CD4-positive, alpha-beta T cell (primary cell): ENCODE measurements at regions of chr6 and their contacts with region 1.

Region 1: DNA sequence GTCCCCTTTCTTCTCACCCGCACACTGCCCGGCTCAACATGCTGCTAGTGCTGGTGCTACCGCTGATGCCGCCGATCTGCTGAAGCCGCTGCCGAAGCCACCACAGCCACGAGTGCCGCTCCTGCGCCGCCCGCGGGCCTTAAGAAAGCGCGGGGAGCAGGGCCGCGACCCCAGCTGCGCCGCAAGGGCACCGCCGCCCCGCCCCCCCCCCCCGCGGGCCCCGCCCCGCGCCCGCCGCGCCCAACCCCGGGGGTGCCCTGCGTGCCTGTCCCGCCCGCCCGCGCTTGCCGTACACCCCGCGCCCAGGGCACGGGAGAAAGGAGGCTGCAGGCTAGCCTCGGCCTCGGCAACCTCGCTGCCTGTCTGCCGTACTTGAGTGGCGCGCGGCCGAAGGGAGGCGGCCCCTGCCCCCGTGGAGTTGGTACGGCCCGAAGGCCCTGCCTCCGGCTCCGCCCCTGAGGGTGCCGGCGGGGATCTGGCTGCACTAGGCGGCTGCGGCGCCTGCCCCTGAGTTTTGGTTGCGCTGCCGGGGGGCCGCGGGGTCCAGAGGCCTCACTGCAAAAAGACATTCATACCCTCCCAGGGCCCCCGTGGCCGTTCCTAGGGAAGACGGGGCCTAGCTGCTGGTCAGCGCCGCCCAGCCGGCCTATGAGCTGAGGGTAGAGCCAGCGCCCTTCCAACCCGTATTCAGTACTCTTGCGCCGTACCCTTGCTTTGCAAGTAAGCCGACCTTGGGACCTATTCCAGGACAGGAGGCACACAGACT is at the start of gene SOD2:
- DNase-seq: peak; percentile 72 to 93 (median 80)
- ATAC-seq: peak; percentile 69
- H3K4me3 ChIP-seq: peak within 1 kb of the TSS; percentile 90
- H3K4me3 Mint-ChIP-seq: peak within 1 kb of the TSS; percentile 98
- H3K27ac ChIP-seq: peak within 1 kb of the TSS; percentile 76 to 92
- H3K27ac Mint-ChIP-seq: peak within 1 kb of the TSS; percentile 88
- H3K4me1 ChIP-seq: peaks cover 47% of the 10 kb centered on the region
- H3K4me1 Mint-ChIP-seq: peaks cover 51% of the 10 kb centered on the region
- H3K27me3 ChIP-seq: no peaks in the 10 kb centered on the region
- H3K27me3 Mint-ChIP-seq: no peaks in the 10 kb centered on the region
- CTCF ChIP-seq: no peak
- total RNA-seq, gene SOD2: 182 to 195 TPM

Region 2: DNA sequence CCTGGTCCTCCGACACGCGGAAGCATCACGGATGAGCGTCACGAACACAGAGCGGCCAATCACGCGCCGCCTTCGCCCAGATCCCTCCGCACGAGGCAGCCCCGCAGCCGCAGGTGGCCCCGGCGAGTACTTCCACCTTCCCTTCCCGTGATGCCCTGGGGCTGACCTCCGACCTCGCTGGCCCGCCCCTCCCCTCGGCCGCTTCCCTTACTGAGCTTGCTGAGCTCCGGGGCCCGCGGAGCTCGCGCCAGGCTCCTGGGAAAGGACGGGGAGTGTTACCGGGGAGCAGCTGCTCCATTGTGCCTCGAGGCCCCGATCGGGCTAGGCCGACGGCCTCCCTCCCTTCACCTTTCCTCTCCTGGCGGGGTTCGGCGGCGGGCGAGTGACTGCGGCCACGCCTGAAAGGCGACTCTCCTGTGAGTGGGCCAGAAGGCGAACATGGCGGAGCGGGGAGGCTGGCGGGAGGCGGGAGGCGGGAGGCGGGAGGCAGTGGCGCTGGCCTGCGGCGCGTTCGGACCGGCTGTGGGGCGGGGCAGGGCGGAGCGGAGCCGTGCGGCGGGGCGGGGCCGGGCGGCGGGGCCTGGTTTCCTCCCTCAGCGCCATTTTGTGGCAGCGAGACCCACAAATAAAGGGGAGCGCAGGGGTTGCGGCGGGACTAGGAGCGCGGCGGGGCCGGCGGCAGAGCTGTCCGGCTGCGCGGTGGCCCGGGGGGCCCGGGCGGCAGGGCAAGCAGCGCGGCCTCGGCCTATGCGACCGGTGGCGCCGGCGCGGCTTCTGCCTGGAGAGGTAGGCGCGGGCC is 33.8 kb after region 1 on chr6 and contains the start of gene WTAP:
- CTCF ChIA-PET with region 1: interaction called, 7 read pairs
- POLR2A ChIA-PET with region 1: interaction called, 195 read pairs
- intact Hi-C with region 1: loop called (anchors 1 kb)
- DNase-seq: peak; percentile 94 to 99 (median 96)
- ATAC-seq: peak; percentile 86
- H3K4me3 ChIP-seq: peak within 1 kb of the TSS; percentile 82
- H3K4me3 Mint-ChIP-seq: peak within 1 kb of the TSS; percentile 99
- H3K27ac ChIP-seq: peak within 1 kb of the TSS; percentile 95 to 98
- H3K27ac Mint-ChIP-seq: peak within 1 kb of the TSS; percentile 100
- H3K4me1 ChIP-seq: peaks cover 25% of the 10 kb centered on the region
- H3K4me1 Mint-ChIP-seq: peaks cover 80% of the 10 kb centered on the region
- H3K27me3 ChIP-seq: no peaks in the 10 kb centered on the region
- H3K27me3 Mint-ChIP-seq: peaks cover 9% of the 10 kb centered on the region
- CTCF ChIP-seq: no peak
- total RNA-seq, gene WTAP: 211 to 227 TPM

Region 3: GRCh38 chr6:159789377-159790148 is 96.3 kb after region 1 on chr6 and contains the start of gene TCP1:
- CTCF ChIA-PET with region 1: interaction called, 8 read pairs
- POLR2A ChIA-PET with region 1: interaction called, 58 read pairs
- intact Hi-C with region 1: loop called (anchors 1 kb)
- DNase-seq: peak; percentile 95 to 100 (median 99)
- ATAC-seq: peak; percentile 83
- H3K4me3 ChIP-seq: peak within 1 kb of the TSS; percentile 84
- H3K4me3 Mint-ChIP-seq: peak within 1 kb of the TSS; percentile 99
- H3K27ac ChIP-seq: peak within 1 kb of the TSS; percentile 88 to 97
- H3K27ac Mint-ChIP-seq: peak within 1 kb of the TSS; percentile 95
- H3K4me1 ChIP-seq: peaks cover 37% of the 10 kb centered on the region
- H3K4me1 Mint-ChIP-seq: peaks cover 73% of the 10 kb centered on the region
- H3K27me3 ChIP-seq: no peaks in the 10 kb centered on the region
- H3K27me3 Mint-ChIP-seq: no peaks in the 10 kb centered on the region
- CTCF ChIP-seq: no peak
- total RNA-seq, gene TCP1: 212 to 216 TPM

Region 4: DNA sequence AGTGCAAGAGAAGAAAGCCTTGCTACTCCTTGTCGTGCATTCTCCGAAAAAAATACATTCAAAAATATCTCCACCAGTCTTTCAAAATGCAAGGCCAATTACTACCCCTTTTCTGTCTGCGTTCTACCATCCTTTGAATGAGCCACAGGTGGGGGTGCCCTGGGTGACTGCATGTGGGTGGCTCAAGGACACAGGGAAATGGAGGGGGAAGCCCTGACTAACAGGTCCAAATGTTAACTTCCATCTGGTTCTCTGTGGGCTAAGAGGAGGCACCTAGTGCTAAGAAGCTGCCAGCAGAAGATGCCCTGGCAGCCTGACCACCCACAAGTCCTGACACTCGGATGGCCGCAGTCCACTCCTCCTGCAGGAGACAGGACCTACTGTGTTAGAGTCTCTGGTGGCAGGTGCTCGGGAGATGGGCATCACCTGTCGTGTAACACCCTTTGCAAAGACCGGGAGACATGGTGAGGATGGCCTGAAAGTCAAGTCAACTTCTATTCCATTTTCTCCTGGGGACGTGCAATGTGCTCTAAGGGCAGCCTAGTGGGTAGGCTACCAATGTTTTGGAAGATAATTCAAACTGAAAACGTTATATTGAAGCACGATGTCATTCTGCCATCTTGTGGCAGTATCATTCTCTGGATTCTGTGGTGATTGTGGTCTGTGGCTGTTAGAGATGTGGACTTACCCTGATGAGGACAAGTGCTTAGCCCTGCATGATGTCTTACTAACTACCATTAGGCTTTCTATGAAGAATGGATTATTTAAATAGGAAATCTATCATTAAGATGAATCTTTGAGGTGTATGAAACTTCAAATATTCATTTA is 248.2 kb after region 1 on chr6:
- CTCF ChIA-PET with region 1: no interaction called
- POLR2A ChIA-PET with region 1: no interaction called
- intact Hi-C with region 1: loop called (anchors 1 kb)
- DNase-seq: peak in 8 of 14 experiments; percentile 5 to 80 (median 22)
- ATAC-seq: peak; percentile 82
- H3K4me3 ChIP-seq: no peak overlapping the region
- H3K4me3 Mint-ChIP-seq: no peak overlapping the region
- H3K27ac ChIP-seq: no peak overlapping the region
- H3K27ac Mint-ChIP-seq: no peak overlapping the region
- H3K4me1 ChIP-seq: peaks cover 4% of the 10 kb centered on the region
- H3K4me1 Mint-ChIP-seq: peaks cover 8% of the 10 kb centered on the region
- H3K27me3 ChIP-seq: no peaks in the 10 kb centered on the region
- H3K27me3 Mint-ChIP-seq: peaks cover 5% of the 10 kb centered on the region
- CTCF ChIP-seq: peak; percentile 46

Region 5: GRCh38 chr6:160041608-160042007 is 348.3 kb after region 1 on chr6:
- CTCF ChIA-PET with region 1: no interaction called
- POLR2A ChIA-PET with region 1: no interaction called
- intact Hi-C with region 1: loop called in 1 of 2 experiments (anchors 10 kb)
- DNase-seq: peak in 3 of 14 experiments; percentile 6 to 21 (median 12)
- ATAC-seq: peak; percentile 79
- H3K4me3 ChIP-seq: no peak overlapping the region
- H3K4me3 Mint-ChIP-seq: no peak overlapping the region
- H3K27ac ChIP-seq: no peak overlapping the region
- H3K27ac Mint-ChIP-seq: no peak overlapping the region
- H3K4me1 ChIP-seq: peaks cover 5% of the 10 kb centered on the region
- H3K4me1 Mint-ChIP-seq: peaks cover 35% of the 10 kb centered on the region
- H3K27me3 ChIP-seq: no peaks in the 10 kb centered on the region
- H3K27me3 Mint-ChIP-seq: no peaks in the 10 kb centered on the region
- CTCF ChIP-seq: no peak

Region 6: DNA sequence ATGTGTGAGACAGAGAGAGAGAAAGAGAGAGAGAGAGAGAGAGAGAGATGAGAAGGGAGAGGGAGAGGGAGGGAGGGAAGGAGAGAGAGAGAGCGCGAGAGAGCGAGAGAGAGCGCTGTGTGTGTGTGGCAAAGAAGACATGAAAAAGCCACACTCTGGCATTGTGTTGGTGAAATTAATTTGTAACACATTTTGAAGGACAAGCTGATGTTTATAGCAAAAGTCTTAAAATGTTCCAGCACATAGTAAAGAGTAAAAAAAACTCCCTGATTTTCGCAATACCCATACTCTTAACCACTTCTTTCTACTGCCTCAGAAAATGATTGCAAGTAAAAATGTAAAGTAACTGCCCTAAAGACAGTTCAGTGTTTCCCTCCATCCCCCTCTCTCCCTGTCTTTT is 485.0 kb after region 1 on chr6:
- CTCF ChIA-PET with region 1: no interaction called
- POLR2A ChIA-PET with region 1: no interaction called
- intact Hi-C with region 1: no loop called
- DNase-seq: no peak
- ATAC-seq: no peak
- H3K4me3 ChIP-seq: no peak overlapping the region
- H3K4me3 Mint-ChIP-seq: no peak overlapping the region
- H3K27ac ChIP-seq: no peak overlapping the region
- H3K27ac Mint-ChIP-seq: no peak overlapping the region
- H3K4me1 ChIP-seq: no peaks in the 10 kb centered on the region
- H3K4me1 Mint-ChIP-seq: no peaks in the 10 kb centered on the region
- H3K27me3 ChIP-seq: peaks cover 0 to 12% of the 10 kb centered on the region in 2 experiments
- H3K27me3 Mint-ChIP-seq: peaks cover 34% of the 10 kb centered on the region
- CTCF ChIP-seq: no peak

Region 7: GRCh38 chr6:160462551-160463109 is 769.3 kb after region 1 on chr6:
- CTCF ChIA-PET with region 1: no interaction called
- POLR2A ChIA-PET with region 1: interaction called, 3 read pairs
- intact Hi-C with region 1: loop called in 1 of 2 experiments (anchors 2 kb)
- DNase-seq: peak in 10 of 14 experiments; percentile 18 to 95 (median 54)
- ATAC-seq: peak; percentile 89
- H3K4me3 ChIP-seq: peak overlapping the region; percentile 19
- H3K4me3 Mint-ChIP-seq: peak overlapping the region; percentile 68
- H3K27ac ChIP-seq: no peak overlapping the region
- H3K27ac Mint-ChIP-seq: peak overlapping the region; percentile 66
- H3K4me1 ChIP-seq: peaks cover 66% of the 10 kb centered on the region
- H3K4me1 Mint-ChIP-seq: peaks cover 82% of the 10 kb centered on the region
- H3K27me3 ChIP-seq: no peaks in the 10 kb centered on the region
- H3K27me3 Mint-ChIP-seq: peaks cover 17% of the 10 kb centered on the region
- CTCF ChIP-seq: no peak